ENCODE measurements at regions of chr14 and their contacts with region 1.

Region 1: GRCh38 chr14:69460093-69460701 is 24.3 kb upstream of the PLEKHD1 start:
- DNase-seq: peak; percentile 49 to 66
- H3K4me3 ChIP-seq: no peak overlapping the region
- H3K4me3 Mint-ChIP-seq: no peak overlapping the region
- H3K27ac Mint-ChIP-seq: no peak overlapping the region
- H3K4me1 ChIP-seq: no peaks in the 10 kb centered on the region
- H3K4me1 Mint-ChIP-seq: no peaks in the 10 kb centered on the region
- H3K27me3 ChIP-seq: no peaks in the 10 kb centered on the region
- H3K27me3 Mint-ChIP-seq: no peaks in the 10 kb centered on the region
- CTCF ChIP-seq: peak; percentile 69 to 77

Region 2: DNA sequence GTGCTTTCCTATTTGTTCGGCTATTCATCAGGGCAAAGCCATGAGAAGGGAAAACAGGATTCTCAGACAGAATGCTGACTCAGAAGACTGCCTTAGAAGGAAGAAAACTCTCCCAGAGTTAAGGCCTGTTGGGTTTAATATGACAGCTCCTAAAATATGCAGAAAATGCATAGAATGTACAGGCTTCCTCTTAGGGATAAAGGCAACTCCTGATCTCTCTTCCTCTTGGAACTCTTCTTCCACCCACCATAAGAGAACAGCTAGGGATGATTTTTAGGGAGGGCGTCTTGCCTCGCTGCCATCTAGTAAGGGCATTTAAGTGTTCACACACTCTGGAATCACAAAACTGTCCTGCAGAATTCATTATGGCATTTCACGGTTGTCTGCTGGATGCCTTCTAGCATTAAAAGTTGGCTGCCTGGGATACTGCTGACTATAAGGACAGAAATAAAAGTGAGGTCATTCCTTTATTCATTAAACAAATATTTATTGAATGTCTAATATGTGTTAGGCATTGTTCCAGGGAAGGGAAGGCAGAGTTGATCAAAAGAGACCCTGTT is 380.9 kb before region 1 on chr14:
- CTCF ChIA-PET with region 1: no interaction called
- POLR2A ChIA-PET with region 1: no interaction called
- intact Hi-C with region 1: no loop called
- DNase-seq: no peak
- H3K4me3 ChIP-seq: no peak overlapping the region
- H3K4me3 Mint-ChIP-seq: no peak overlapping the region
- H3K27ac Mint-ChIP-seq: peak overlapping the region; percentile 56
- H3K4me1 ChIP-seq: peaks cover 61% of the 10 kb centered on the region
- H3K4me1 Mint-ChIP-seq: peaks cover 43% of the 10 kb centered on the region
- H3K27me3 ChIP-seq: no peaks in the 10 kb centered on the region
- H3K27me3 Mint-ChIP-seq: no peaks in the 10 kb centered on the region
- CTCF ChIP-seq: no peak

Region 3: DNA sequence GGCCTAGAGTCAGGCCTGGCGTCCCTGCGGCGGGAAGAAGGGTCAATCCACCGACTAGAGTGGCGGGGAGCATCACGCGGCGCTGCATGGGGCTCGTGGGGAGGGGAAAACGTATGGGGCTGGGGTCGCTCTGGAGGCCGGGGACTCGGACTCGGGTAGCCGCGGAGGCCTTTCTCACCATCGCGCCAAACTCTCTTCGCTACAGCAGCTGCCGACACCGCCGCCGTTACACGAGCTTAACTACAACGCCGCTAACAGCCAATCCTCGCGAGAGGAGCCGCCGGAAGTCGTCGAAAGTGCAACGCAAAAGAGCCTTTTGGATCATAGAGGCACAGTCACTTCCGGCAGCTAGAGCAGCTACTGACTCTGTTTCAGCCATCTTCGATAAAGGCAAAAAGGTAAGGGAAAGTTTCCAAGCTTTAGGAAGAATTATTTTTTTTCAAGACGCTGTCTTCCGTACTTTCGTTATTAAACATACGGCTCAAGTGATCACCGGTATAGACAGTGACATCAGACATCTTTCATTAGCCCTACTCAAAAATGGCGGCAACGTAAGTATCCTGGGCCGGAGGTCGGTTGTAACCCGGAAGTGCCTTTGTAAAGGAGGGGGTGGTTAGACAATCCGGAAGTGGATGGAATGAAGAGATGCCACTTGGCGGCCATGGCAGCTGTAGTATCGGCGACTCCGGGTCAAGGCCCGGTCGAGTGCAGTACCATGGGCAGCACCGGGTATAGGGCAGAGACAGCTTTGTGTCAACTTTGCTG is 62.0 kb before region 1 on chr14 and contains the starts of genes ERH and SLC39A9:
- CTCF ChIA-PET with region 1: interaction called, 6 read pairs
- POLR2A ChIA-PET with region 1: interaction called, 7 read pairs
- intact Hi-C with region 1: loop called (anchors 5 kb)
- DNase-seq: peak; percentile 93 to 95
- H3K4me3 ChIP-seq: peak within 1 kb of the TSS; percentile 74
- H3K4me3 Mint-ChIP-seq: peak within 1 kb of the TSS; percentile 92
- H3K27ac Mint-ChIP-seq: peak within 1 kb of the TSS; percentile 98
- H3K4me1 ChIP-seq: peaks cover 3% of the 10 kb centered on the region; the same call in 1 of the 2 replicates
- H3K4me1 Mint-ChIP-seq: peaks cover 9% of the 10 kb centered on the region
- H3K27me3 ChIP-seq: no peaks in the 10 kb centered on the region
- H3K27me3 Mint-ChIP-seq: no peaks in the 10 kb centered on the region
- CTCF ChIP-seq: no peak
- total RNA-seq, gene ERH: 365 and 388 TPM in 2 replicates
- total RNA-seq, gene SLC39A9: 94.2 and 96.4 TPM in 2 replicates

Region 4: GRCh38 chr14:69559581-69560011 is 99.4 kb after region 1 on chr14:
- CTCF ChIA-PET with region 1: no interaction called
- POLR2A ChIA-PET with region 1: no interaction called
- intact Hi-C with region 1: no loop called
- DNase-seq: no peak
- H3K4me3 ChIP-seq: no peak overlapping the region
- H3K4me3 Mint-ChIP-seq: no peak overlapping the region
- H3K27ac Mint-ChIP-seq: no peak overlapping the region
- H3K4me1 ChIP-seq: no peaks in the 10 kb centered on the region
- H3K4me1 Mint-ChIP-seq: no peaks in the 10 kb centered on the region
- H3K27me3 ChIP-seq: no peaks in the 10 kb centered on the region
- H3K27me3 Mint-ChIP-seq: peaks cover 15% of the 10 kb centered on the region
- CTCF ChIP-seq: no peak